ENCODE measurements at regions of chrX and their contacts with region 1.

Region 1: DNA sequence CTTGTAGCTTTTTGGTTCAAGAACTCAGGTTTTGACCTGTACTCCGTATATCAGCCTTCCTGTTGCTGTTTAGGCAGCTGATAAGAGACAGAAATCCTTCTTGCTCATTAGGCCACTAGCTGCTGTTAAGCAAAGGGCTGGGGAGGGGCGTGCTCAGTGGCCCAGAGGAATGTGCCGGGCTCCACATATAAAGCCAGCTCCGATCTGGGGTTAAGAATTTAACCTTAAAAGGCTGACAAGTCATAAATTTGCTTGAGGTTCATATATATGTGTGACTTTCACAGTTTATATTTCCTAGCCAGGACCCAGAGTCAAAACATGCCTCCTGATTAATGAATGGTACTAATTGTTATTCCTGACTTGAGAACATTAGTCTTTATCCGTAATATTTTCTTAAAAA is 15.3 kb downstream of the GPC3 start:
- DNase-seq: no peak
- H3K4me3 ChIP-seq: no peak overlapping the region
- H3K27ac ChIP-seq: no peak overlapping the region
- H3K4me1 ChIP-seq: no peaks in the 10 kb centered on the region
- H3K27me3 ChIP-seq: peaks cover 5% of the 10 kb centered on the region
- CTCF ChIP-seq: no peak

Region 2: DNA sequence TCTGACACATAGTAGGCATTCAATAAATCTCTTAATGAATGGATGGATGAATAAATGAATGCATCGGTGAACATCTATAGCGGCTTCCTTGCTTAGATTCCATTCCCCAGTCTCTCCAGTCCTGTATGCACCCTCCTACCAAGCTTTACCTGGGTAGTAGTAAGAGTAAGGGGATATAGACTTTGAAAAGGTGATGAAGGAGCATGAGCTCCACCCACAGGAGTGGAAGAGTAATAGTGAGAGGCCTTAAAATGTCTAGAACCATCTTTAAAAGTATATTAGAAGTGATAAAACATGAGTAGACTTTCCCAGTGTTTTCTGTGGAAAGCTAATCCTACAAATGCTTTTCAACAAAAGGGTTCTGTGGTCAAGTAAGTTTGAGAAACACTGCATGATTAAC is 50.8 kb after region 1 on chrX:
- CTCF ChIA-PET with region 1: no interaction called
- dilution Hi-C with region 1: loop called (anchors 5 kb)
- in situ Hi-C with region 1: no loop called
- intact Hi-C with region 1: no loop called
- DNase-seq: no peak
- H3K4me3 ChIP-seq: no peak overlapping the region
- H3K27ac ChIP-seq: no peak overlapping the region
- H3K4me1 ChIP-seq: no peaks in the 10 kb centered on the region
- H3K27me3 ChIP-seq: no peaks in the 10 kb centered on the region
- CTCF ChIP-seq: peak in 1 of 2 donors; percentile 29

Measured in mammary epithelial cell (primary cell).